ENCODE measurements at regions of chr1 and their contacts with region 1.

Region 1: DNA sequence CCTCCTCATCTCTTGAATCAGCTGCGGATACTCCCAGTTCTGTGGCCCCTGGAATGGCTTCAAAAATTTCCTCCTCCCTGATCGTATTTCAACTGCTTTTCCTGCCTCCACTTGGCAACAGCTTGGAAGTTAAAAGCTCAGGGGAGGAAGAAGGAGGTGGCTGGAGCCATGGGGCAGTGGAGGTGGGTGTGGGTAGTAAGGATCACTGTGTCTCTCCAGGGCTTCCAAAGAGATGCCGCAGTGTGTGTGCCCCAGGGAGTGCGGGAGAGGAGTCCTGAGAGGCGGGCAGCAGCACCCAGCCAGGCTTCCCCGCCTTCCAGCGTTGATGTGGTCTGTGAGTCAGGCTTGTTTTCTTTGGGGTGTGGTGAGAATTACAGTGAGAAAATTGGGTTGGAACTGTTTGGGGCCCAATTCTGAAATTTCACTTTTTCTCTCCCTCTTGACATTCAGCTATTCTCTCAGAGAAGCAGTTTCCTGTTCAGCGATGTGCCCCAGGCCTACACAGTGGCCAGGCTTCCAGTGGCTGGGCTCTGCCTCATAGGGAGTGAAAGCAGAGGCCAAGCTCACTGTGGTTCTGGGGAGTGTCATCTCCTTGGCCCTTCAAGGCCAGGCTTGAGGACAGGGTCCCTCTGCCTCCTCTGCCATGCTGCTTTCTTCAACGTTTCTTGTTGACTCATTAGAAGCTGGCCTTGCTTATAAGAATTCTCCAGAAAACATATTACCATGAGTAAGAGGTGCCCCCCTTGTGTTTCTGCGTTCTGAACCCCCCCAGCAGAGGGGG is 69.0 kb downstream of the PGM1 start:
- DNase-seq: peak; percentile 97
- H3K4me3 Mint-ChIP-seq: peak overlapping the region; percentile 58
- H3K27ac Mint-ChIP-seq: peak overlapping the region; percentile 97
- H3K4me1 Mint-ChIP-seq: peaks cover 39% of the 10 kb centered on the region
- H3K27me3 Mint-ChIP-seq: no peaks in the 10 kb centered on the region
- CTCF ChIP-seq: no peak

Region 2: DNA sequence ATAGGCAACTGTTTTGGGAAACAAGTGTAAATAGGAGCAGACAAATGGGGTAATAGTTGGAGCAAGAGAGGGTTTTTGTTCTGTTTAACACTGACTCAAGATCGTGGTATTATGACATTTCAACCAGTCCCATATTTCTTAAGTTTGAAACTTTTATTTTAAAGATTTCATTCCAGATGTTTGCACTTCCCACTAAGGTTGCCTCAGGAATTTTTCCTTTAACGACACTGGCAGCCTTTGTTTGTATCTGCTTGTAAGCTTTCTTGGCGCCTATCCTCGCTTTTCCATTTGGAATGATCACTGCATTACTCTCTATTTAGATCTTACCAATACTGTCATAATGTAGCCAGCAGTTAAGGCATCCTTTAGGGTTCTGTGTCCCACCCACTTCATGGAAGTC is 227.1 kb before region 1 on chr1:
- CTCF ChIA-PET with region 1: no interaction called
- POLR2A ChIA-PET with region 1: no interaction called
- intact Hi-C with region 1: no loop called
- DNase-seq: no peak
- H3K4me3 Mint-ChIP-seq: no peak overlapping the region
- H3K27ac Mint-ChIP-seq: no peak overlapping the region
- H3K4me1 Mint-ChIP-seq: no peaks in the 10 kb centered on the region
- H3K27me3 Mint-ChIP-seq: no peaks in the 10 kb centered on the region
- CTCF ChIP-seq: no peak

Region 3: DNA sequence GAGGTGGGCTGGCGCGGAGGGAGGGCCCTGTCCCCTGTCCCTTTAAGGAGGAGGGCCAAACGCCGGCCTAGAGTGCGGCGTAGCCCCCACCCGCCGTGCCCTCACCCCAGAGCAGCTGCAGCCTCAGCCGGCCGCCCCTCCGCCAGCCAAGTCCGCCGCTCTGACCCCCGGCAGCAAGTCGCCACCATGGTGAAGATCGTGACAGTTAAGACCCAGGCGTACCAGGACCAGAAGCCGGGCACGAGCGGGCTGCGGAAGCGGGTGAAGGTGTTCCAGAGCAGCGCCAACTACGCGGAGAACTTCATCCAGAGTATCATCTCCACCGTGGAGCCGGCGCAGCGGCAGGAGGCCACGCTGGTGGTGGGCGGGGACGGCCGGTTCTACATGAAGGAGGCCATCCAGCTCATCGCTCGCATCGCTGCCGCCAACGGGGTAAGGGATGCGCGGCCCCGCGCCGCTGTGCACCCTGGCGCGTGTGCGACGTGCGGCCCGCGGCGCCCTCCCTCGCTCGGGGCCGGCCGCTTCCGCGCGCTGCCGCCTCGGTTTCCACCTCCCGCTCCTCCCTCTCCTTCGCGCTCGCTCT is 68.9 kb before region 1 on chr1 and contains the start of gene PGM1:
- CTCF ChIA-PET with region 1: no interaction called
- POLR2A ChIA-PET with region 1: interaction called, 9 read pairs
- intact Hi-C with region 1: loop called (anchors 2 kb)
- DNase-seq: peak; percentile 72
- H3K4me3 Mint-ChIP-seq: peak within 1 kb of the TSS; percentile 96
- H3K27ac Mint-ChIP-seq: peak within 1 kb of the TSS; percentile 92
- H3K4me1 Mint-ChIP-seq: peaks cover 23% of the 10 kb centered on the region
- H3K27me3 Mint-ChIP-seq: no peaks in the 10 kb centered on the region
- CTCF ChIP-seq: no peak
- total RNA-seq, gene PGM1: 60.2 and 77.9 TPM in 2 replicates

Region 4: DNA sequence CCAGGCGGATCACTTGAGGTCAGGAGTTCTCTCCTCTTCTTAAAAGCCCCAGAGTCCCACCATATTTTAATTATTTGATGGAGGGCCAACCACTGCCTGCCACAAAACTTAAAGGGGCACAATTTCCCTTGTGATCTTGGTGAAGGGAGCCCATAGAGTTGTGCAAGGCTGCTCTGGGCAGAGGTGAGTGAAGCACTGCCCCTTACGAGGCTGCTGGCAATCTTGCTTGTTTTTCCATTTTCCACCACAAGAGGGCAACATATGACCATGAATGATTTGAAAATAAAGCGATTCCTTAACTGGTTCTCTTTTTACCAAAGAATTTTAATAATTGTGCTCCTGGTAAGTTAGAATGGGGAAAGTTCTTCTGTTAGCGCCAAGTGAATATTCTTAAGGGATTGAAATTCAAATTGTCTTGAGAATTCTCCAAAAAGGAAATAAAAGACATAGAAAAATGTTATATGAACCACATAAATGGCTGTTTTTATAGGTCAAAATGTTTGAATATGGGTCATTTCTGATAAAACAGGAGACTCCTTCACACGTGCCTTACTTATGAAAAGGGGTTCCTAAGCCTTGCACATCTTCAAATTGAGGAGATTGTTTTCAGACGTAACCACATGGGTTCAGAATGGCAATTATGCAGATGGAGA is 46.4 kb before region 1 on chr1:
- CTCF ChIA-PET with region 1: interaction called, 5 read pairs
- POLR2A ChIA-PET with region 1: interaction called, 5 read pairs
- intact Hi-C with region 1: loop called (anchors 5 kb)
- DNase-seq: peak; percentile 82
- H3K4me3 Mint-ChIP-seq: no peak overlapping the region
- H3K27ac Mint-ChIP-seq: no peak overlapping the region
- H3K4me1 Mint-ChIP-seq: peaks cover 24% of the 10 kb centered on the region
- H3K27me3 Mint-ChIP-seq: no peaks in the 10 kb centered on the region
- CTCF ChIP-seq: peak; percentile 72

Region 5: DNA sequence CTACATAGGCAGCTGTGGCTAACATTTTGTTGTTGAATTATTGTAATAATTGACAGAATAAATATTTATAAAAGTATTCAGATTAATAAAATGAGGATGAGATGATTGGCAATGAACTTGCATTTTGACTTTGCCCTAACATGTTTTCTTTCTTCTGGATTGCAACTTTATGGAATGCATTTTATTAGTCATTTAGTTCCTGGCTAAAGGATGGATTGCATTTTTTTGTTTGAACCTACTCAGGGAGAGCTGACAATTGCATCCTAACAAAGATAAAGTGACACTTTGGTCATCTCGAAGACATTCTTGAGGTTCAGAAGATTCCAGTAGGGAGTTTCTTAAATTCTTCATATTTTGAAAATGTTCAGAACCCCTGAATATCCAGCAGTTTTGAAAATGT is 31.6 kb before region 1 on chr1:
- CTCF ChIA-PET with region 1: interaction called, 3 read pairs
- POLR2A ChIA-PET with region 1: interaction called, 13 read pairs
- intact Hi-C with region 1: no loop called
- DNase-seq: no peak
- H3K4me3 Mint-ChIP-seq: no peak overlapping the region
- H3K27ac Mint-ChIP-seq: no peak overlapping the region
- H3K4me1 Mint-ChIP-seq: peaks cover 8% of the 10 kb centered on the region
- H3K27me3 Mint-ChIP-seq: no peaks in the 10 kb centered on the region
- CTCF ChIP-seq: no peak

Region 6: GRCh38 chr1:63651161-63651701 is 11.0 kb before region 1 on chr1:
- CTCF ChIA-PET with region 1: interaction called, 4 read pairs
- POLR2A ChIA-PET with region 1: interaction called, 17 read pairs
- intact Hi-C with region 1: no loop called
- DNase-seq: no peak
- H3K4me3 Mint-ChIP-seq: no peak overlapping the region
- H3K27ac Mint-ChIP-seq: no peak overlapping the region
- H3K4me1 Mint-ChIP-seq: no peaks in the 10 kb centered on the region
- H3K27me3 Mint-ChIP-seq: no peaks in the 10 kb centered on the region
- CTCF ChIP-seq: no peak

Region 7: DNA sequence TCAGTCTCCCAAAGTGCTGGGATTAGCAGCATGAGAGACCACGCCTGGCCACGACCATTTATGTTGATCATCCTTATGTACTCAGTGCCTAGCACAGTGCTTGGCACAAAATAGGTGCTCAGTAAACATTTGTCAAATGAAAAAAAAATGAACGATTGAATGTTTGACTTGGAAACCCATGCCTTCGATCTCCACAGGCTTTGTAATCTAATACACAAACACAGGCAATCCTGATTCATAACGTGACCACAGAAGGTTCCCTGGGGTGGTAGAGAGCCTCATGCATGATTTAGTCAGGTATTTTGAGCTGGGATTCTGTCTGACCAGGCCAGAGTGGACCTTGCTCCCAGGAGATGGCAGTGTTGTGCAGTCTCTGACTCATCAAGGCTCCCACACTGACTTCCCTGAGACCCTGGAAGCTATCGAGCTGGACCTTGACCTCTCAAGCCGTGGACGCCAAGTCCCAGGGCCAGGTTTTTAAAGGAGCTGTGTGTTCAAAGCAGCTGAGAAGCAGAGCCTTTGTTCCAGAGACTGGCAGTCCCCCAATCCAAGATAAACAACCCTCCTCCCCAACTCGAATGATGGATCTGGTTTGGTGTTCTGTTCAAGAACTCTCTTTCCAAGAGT is 12.1 kb after region 1 on chr1:
- CTCF ChIA-PET with region 1: interaction called, 35 read pairs
- POLR2A ChIA-PET with region 1: interaction called, 7 read pairs
- intact Hi-C with region 1: no loop called
- DNase-seq: peak; percentile 90
- H3K4me3 Mint-ChIP-seq: no peak overlapping the region
- H3K27ac Mint-ChIP-seq: no peak overlapping the region
- H3K4me1 Mint-ChIP-seq: peaks cover 11% of the 10 kb centered on the region
- H3K27me3 Mint-ChIP-seq: no peaks in the 10 kb centered on the region
- CTCF ChIP-seq: peak; percentile 58

Region 8: GRCh38 chr1:64082459-64082858 is 420.2 kb after region 1 on chr1:
- CTCF ChIA-PET with region 1: no interaction called
- POLR2A ChIA-PET with region 1: no interaction called
- intact Hi-C with region 1: no loop called
- DNase-seq: peak; percentile 21
- H3K4me3 Mint-ChIP-seq: no peak overlapping the region
- H3K27ac Mint-ChIP-seq: no peak overlapping the region
- H3K4me1 Mint-ChIP-seq: peaks cover 7% of the 10 kb centered on the region
- H3K27me3 Mint-ChIP-seq: no peaks in the 10 kb centered on the region
- CTCF ChIP-seq: no peak